ENCODE measurements at regions of chr5 and their contacts with region 1.

Region 1: GRCh38 chr5:152532714-152533113 is 127.6 kb upstream of the NMUR2 start:
- DNase-seq: peak; percentile 64
- H3K4me3 Mint-ChIP-seq: no peak overlapping the region
- H3K27ac Mint-ChIP-seq: no peak overlapping the region
- H3K4me1 Mint-ChIP-seq: peaks cover 14% of the 10 kb centered on the region
- H3K27me3 Mint-ChIP-seq: peaks cover 14% of the 10 kb centered on the region

Region 2: GRCh38 chr5:152271420-152271819 is 261.3 kb before region 1 on chr5:
- intact Hi-C with region 1: no loop called
- DNase-seq: no peak
- H3K4me3 Mint-ChIP-seq: no peak overlapping the region
- H3K27ac Mint-ChIP-seq: no peak overlapping the region
- H3K4me1 Mint-ChIP-seq: no peaks in the 10 kb centered on the region
- H3K27me3 Mint-ChIP-seq: no peaks in the 10 kb centered on the region

Region 3: GRCh38 chr5:152560512-152561137 is 27.9 kb after region 1 on chr5:
- intact Hi-C with region 1: no loop called
- DNase-seq: peak; percentile 74
- H3K4me3 Mint-ChIP-seq: no peak overlapping the region
- H3K27ac Mint-ChIP-seq: no peak overlapping the region
- H3K4me1 Mint-ChIP-seq: no peaks in the 10 kb centered on the region
- H3K27me3 Mint-ChIP-seq: no peaks in the 10 kb centered on the region

Region 4: DNA sequence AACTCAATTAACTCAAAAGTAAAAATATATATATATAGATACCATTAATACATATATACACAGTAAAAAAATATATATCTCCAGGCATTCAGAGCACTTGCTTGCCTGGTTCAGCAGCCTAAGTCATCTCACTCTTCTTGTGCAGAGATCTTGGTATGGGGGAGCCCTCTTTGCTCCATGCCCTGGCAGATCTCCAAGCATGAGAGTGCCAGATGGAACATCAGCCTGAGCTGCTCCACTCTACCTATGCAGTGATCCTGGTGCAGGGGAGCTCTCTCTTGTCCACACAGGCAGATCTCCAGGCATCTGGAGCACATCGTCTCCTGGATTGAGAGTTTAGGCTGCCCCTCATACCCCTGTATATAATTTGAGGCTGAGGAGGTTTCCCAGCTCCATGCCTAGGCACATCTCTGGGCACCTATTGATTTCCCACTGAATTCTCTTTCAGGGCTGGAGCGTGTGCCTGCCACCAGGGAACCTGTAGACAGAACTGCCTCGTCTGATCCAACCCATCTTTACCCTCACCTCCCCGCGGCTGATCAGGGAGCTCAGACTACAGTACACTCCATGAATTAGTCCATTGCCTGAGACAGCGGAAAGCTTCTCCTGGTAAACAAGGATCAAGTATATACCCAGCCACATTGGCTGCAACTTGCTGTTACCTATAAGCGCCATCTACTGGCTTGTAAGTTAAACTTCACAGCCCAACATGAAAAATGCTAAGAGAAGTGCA is 615.3 kb after region 1 on chr5:
- intact Hi-C with region 1: loop called (anchors 2 kb)
- DNase-seq: no peak
- H3K4me3 Mint-ChIP-seq: no peak overlapping the region
- H3K27ac Mint-ChIP-seq: no peak overlapping the region
- H3K4me1 Mint-ChIP-seq: no peaks in the 10 kb centered on the region
- H3K27me3 Mint-ChIP-seq: no peaks in the 10 kb centered on the region

Region 5: GRCh38 chr5:153964880-153965645 is 1432.3 kb after region 1 on chr5:
- intact Hi-C with region 1: loop called (anchors 1 kb)
- DNase-seq: peak; percentile 83
- H3K4me3 Mint-ChIP-seq: no peak overlapping the region
- H3K27ac Mint-ChIP-seq: no peak overlapping the region
- H3K4me1 Mint-ChIP-seq: peaks cover 1% of the 10 kb centered on the region
- H3K27me3 Mint-ChIP-seq: peaks cover 6% of the 10 kb centered on the region

Measured in activated CD4-positive, alpha-beta T cell treated with anti-CD3 and anti-CD28 coated beads, Interleukin-2, amount 10 ng/mL, durations not matched to agents 24 days and 14 days (primary cell).